AG04449 (cell line): ENCODE measurements at regions of chr9 and their contacts with region 1.

Region 1: GRCh38 chr9:34591248-34591916 is 1.9 kb upstream of the CNTFR start:
- DNase-seq: no peak
- H3K4me3 ChIP-seq: no peak overlapping the region; the same call in 1 of the 2 replicates
- CTCF ChIP-seq: peak; percentile 99

Region 2: DNA sequence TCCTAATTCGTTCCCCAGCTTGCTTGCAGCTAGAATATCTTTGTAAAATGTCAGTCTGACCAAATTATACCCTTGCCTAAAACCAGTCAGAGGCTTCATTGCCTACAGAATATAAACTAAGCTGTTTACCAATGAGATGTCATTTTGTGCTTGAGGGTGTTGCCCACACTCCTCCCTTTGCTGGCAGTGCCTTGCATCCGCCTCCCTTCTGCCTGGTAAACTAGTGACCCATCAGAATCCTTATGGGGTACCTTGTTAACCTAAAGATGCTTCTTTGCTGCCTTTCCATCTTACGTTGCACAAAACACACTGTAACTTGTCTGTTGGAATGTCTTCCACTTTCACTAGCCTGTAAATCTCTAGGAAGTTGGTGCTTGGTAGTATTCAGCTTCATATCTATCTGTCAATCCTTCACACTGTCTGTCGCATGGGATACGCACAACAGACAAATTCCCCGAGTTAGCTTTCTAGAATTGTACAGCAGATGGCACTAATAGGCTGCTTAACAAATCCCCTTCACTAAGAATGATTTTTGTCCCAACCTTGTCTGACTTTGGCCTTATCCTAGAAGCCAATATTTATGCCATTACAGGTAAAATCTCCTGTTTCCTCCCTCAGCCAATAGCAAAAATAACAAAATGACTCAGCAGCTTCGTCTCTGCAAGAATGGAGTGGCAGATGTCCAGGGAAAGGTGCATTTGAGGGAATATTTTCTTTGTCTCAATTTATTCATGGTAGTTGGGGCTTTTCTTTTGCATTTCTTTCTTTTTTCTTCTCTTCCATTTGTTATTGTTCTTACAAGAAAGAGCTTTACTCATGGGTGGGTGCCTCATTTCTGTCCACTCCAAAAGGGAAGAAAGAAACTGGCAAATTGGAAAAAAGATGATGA is 259.1 kb before region 1 on chr9:
- CTCF ChIA-PET with region 1: interaction called, 57 read pairs
- POLR2A ChIA-PET with region 1: no interaction called
- DNase-seq: no peak
- H3K4me3 ChIP-seq: no peak overlapping the region
- CTCF ChIP-seq: peak; percentile 35

Region 3: DNA sequence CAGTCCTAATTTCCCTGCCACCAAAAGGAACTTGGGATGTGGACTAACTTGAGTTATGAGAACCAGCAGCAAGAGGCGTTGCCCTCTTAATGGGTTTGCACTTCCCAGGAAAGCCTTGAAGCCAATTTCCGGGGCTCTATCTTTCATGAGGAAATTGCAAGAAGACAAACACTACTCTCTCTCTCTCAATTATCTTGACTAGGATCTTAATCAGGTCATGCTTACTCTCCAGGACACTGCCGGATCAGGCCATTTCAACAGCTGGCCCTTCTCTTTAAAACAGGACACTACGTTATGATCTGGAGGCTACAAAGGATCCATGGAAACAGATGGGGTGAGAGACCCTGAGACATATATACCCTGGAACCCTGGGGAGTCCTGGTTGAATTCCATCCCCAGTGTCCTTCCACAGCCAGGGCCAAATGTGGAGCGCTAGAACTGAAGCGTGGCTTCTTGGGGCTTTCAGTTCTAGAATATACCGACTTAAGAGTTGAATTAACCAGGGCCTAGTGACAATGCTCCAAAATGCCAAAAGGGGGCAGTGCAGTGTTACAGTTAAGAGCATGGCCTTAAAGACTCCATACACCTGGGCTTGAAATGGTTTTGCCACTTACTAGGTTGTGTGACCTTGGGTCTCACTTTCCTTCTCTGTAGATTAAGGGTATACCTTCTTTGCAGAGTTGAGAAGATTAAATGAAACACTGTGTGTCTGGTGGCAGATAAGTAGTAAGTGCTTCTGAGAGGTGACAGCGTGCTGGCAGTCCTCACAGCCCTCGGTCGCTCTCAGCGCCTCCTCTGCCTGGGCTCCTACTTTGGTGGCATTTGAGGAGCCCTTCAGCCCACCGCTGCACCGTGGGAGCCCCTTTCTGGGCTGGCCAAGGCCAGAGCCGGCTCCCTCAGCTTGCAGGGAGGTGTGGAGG is 154.1 kb before region 1 on chr9:
- CTCF ChIA-PET with region 1: interaction called, 30 read pairs
- POLR2A ChIA-PET with region 1: no interaction called
- DNase-seq: no peak
- H3K4me3 ChIP-seq: no peak overlapping the region
- CTCF ChIP-seq: peak; percentile 71

Region 4: DNA sequence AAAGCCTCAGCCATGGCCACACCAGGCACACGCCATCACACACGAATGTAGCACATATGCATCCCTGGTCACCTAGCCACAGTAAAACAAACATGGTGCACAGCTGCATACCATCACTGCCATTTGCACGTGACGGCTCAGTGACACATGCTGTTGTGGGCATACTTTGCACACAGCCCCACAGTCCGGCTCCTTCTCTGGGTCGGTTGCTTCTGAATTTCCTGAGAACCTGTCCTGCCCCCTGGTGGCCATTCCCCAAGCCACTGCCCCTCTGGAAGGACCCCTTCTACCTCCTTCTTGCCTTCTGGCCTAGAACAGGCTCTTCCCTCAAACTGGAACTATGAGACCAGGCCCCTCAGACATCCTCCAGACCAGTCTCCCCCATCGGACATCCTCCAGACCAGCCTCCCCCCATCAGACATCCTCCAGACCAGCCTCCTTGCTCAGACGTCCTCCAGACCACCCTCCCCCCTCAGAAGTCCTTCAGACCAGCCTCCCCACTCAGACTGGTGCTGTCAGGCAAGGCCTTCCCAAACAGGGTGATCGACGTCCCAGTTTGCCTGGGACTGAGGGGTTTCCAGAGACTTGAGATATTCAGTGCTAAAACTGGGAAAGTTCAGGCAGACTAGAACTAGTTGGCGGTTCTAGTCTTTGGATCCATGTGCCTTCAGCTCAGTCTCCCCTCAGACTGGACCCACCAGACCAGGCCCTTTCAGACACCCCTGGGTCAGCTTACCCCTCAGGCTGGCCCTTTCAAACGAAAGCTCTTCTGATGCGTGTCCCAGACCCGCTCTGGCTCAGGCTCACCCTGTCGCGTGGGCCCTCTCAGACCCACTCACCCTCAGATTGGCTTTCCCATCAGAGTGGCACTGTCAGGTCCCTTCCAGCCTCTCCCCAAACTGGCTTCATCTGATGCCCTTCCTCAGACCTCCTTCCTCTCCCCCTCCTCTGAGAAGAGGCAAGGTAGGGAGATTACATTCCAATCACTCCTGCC is 44.3 kb before region 1 on chr9:
- CTCF ChIA-PET with region 1: interaction called, 255 read pairs
- POLR2A ChIA-PET with region 1: interaction called, 3 read pairs
- DNase-seq: no peak
- H3K4me3 ChIP-seq: no peak overlapping the region
- CTCF ChIP-seq: peak; percentile 60

Region 5: GRCh38 chr9:34570376-34570775 is 21.0 kb before region 1 on chr9:
- CTCF ChIA-PET with region 1: interaction called, 119 read pairs
- POLR2A ChIA-PET with region 1: no interaction called
- DNase-seq: no peak
- H3K4me3 ChIP-seq: no peak overlapping the region
- CTCF ChIP-seq: no peak

Region 6: GRCh38 chr9:34603610-34604231 is 12.3 kb after region 1 on chr9:
- CTCF ChIA-PET with region 1: interaction called, 110 read pairs
- POLR2A ChIA-PET with region 1: no interaction called
- DNase-seq: no peak
- H3K4me3 ChIP-seq: no peak overlapping the region
- CTCF ChIP-seq: peak; percentile 88

Region 7: DNA sequence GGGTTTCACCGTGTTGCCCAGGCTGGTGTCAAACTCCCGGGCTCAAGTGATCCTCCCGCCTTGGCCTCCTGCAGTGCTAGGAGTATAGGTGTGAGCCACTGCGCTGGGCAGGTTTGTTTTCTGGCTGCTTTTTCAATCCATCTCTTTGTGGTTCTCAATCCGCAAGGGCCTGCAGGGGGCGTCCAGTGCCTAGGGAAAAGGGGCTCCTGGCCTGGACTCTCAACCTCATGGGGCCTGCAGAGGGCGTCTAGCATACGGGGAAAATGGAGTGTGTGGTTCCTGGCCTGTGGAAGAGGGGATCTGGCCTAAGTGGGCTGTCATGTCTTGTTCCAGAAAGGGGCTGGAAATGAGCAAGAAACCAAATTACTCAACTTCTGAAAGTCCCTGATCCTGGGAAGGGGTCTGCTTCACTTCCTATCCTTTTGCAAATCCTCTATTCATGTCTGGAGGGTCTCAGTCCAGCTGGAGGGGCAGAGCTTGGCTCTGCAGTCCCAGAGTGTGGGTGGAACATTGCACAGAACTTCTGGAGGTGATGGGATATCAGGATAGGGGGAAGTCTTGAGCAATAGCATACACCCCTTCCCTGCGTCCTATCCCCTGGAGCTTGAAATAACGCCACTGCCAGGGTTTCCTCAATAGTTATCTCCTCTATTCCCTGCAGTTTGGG is 83.8 kb after region 1 on chr9:
- CTCF ChIA-PET with region 1: no interaction called
- POLR2A ChIA-PET with region 1: no interaction called
- DNase-seq: no peak
- H3K4me3 ChIP-seq: no peak overlapping the region
- CTCF ChIP-seq: peak; percentile 87

Region 8: DNA sequence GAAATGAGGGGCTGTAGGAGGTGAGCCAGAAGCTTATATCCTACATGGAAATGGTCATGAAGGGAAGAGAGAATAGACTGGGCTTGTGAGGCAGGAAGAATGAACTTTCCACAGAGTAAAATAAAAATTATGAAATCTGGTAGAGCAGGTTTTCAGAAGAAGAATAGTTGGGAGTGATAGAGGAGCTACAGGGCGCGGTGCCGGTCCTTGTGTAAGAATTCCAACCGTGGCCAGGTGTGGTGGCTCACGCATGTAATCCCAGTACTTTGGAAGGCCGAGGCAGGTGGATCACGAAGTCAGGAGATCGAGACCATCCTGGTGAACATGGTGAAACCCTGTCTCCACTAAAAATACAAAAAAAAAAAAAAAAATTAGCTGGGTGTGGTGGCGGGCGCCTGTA is 561.6 kb after region 1 on chr9:
- CTCF ChIA-PET with region 1: no interaction called
- POLR2A ChIA-PET with region 1: no interaction called
- DNase-seq: no peak
- H3K4me3 ChIP-seq: no peak overlapping the region
- CTCF ChIP-seq: no peak